ENCODE measurements at regions of chr11 and their contacts with region 1.

Region 1: GRCh38 chr11:119323538-119324033 is 6.7 kb upstream of the MCAM start:
- DNase-seq: peak; percentile 61 to 82 (median 77)
- ATAC-seq: peak; percentile 50
- H3K4me3 ChIP-seq: no peak overlapping the region
- H3K4me3 Mint-ChIP-seq: peak overlapping the region in 4 of 10 donors; percentile 10 to 54 (median 44)
- H3K27ac ChIP-seq: no peak overlapping the region
- H3K27ac Mint-ChIP-seq: peak overlapping the region in 2 of 9 donors; percentile 15 to 57
- H3K4me1 ChIP-seq: no peaks in the 10 kb centered on the region
- H3K4me1 Mint-ChIP-seq: peaks cover 11 to 33% (median 26%) of the 10 kb centered on the region in 7 donors
- H3K27me3 ChIP-seq: no peaks in the 10 kb centered on the region
- H3K27me3 Mint-ChIP-seq: peaks cover 0 to 17% (median 11%) of the 10 kb centered on the region in 5 donors

Region 2: DNA sequence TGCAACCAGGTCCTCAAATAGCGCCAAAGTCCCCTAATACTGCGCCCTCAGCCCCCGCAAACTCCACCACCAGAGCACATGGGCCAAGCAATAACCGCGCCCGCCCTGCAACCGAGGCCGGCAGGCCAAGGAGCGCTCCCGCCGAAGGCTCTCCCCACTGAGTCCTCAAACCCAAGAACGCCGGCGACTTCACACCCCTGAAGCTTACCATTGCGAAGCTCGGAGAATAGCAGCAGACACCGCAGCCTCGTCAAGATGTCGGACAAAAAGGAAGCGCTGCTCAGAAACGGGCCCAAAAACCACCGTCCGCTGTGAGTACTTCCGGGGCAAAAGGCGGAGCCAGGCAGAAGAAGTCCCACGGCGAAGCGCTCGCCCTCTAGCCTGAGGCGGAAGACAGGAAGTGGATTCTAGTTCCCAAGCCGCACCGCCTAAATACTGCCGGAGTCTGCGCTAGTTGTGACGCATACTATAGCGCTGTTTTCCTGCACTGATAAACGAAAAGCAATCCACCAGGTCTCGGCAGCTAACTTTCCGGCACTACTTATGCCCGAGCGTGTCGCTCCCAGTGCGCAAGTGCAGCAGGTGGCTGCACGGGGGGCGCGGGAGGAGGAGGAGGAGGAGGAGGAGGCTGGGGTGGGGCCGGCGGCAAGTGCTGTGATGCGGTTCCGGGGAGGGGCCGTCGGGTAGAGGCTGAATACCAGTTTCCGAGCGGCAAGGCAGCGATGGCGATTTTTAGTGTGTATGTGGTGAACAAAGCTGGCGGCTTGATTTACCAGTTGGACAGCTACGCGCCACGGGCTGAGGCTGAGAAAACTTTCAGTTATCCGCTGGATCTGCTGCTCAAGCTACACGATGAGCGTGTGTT is 305.3 kb before region 1 on chr11 and contains the starts of genes RPS25 and TRAPPC4:
- CTCF ChIA-PET with region 1: no interaction called
- POLR2A ChIA-PET with region 1: no interaction called
- intact Hi-C with region 1: loop called in 1 of 2 experiments (anchors 5 kb)
- DNase-seq: peak; percentile 87 to 98 (median 96)
- ATAC-seq: peak; percentile 93
- H3K4me3 ChIP-seq: peak within 1 kb of the TSS; percentile 89
- H3K4me3 Mint-ChIP-seq: peak within 1 kb of the TSS; percentile 96 to 100 (median 98)
- H3K27ac ChIP-seq: peak within 1 kb of the TSS; percentile 98
- H3K27ac Mint-ChIP-seq: peak within 1 kb of the TSS; percentile 99 to 100 (median 100)
- H3K4me1 ChIP-seq: peaks cover 30 to 32% of the 10 kb centered on the region in 2 donors
- H3K4me1 Mint-ChIP-seq: peaks cover 21 to 75% (median 50%) of the 10 kb centered on the region in 7 donors
- H3K27me3 ChIP-seq: no peaks in the 10 kb centered on the region
- H3K27me3 Mint-ChIP-seq: no peaks in the 10 kb centered on the region
- total RNA-seq, gene RPS25: 1,535 to 3,042 (median 2,772) TPM
- total RNA-seq, gene TRAPPC4: 70.7 to 80.3 (median 77.8) TPM

Region 3: GRCh38 chr11:119121008-119121810 is 202.4 kb before region 1 on chr11 and contains the start of gene HINFP:
- CTCF ChIA-PET with region 1: interaction called, 3 read pairs
- POLR2A ChIA-PET with region 1: interaction called, 3 read pairs
- intact Hi-C with region 1: loop called in 1 of 2 experiments (anchors 2 kb)
- DNase-seq: peak; percentile 92 to 100 (median 98)
- ATAC-seq: peak; percentile 99
- H3K4me3 ChIP-seq: peak within 1 kb of the TSS; percentile 71
- H3K4me3 Mint-ChIP-seq: peak within 1 kb of the TSS; percentile 86 to 98 (median 94)
- H3K27ac ChIP-seq: peak within 1 kb of the TSS; percentile 85
- H3K27ac Mint-ChIP-seq: peak within 1 kb of the TSS; percentile 78 to 98 (median 95)
- H3K4me1 ChIP-seq: peaks cover 17 to 23% of the 10 kb centered on the region in 2 donors
- H3K4me1 Mint-ChIP-seq: peaks cover 34 to 58% (median 50%) of the 10 kb centered on the region in 7 donors
- H3K27me3 ChIP-seq: no peaks in the 10 kb centered on the region
- H3K27me3 Mint-ChIP-seq: no peaks in the 10 kb centered on the region
- total RNA-seq, gene HINFP: 30.7 to 79.7 (median 42.7) TPM

Region 4: DNA sequence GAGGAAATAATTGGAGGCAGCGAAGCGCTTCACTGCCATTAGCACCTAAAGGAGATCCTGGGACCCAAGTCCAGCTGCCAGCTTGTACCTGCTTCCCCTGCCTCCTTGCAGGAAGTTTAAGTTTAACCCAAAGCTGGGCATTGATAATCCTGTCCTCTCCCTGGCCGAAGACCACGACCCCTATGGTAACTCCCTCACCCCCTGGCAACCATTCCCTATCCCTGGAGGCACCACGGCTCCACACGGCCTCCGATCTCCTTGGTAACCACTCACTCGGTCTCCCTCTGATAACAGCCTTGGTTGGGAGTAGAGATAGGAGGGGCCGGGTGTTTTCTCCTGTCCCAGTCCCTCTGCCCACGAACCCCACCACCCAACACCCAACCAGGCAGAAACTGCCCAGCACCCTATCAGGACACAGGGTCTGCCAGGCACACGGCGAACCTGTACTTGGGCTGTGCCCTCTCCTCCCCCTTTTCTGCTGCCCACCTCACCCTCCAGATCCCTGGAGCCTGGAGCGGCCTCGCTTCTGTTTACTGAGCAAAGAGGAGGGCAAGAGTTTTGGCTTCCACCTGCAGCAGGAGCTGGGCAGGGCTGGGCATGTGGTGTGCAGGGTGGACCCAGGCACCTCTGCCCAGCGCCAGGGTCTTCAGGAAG is 137.5 kb before region 1 on chr11:
- CTCF ChIA-PET with region 1: no interaction called
- POLR2A ChIA-PET with region 1: no interaction called
- intact Hi-C with region 1: no loop called
- DNase-seq: no peak
- ATAC-seq: no peak
- H3K4me3 ChIP-seq: no peak overlapping the region
- H3K4me3 Mint-ChIP-seq: no peak overlapping the region
- H3K27ac ChIP-seq: no peak overlapping the region
- H3K27ac Mint-ChIP-seq: no peak overlapping the region
- H3K4me1 ChIP-seq: no peaks in the 10 kb centered on the region
- H3K4me1 Mint-ChIP-seq: no peaks in the 10 kb centered on the region
- H3K27me3 ChIP-seq: no peaks in the 10 kb centered on the region
- H3K27me3 Mint-ChIP-seq: no peaks in the 10 kb centered on the region

Region 5: GRCh38 chr11:119196833-119197483 is 126.6 kb before region 1 on chr11:
- CTCF ChIA-PET with region 1: interaction called, 11 read pairs
- POLR2A ChIA-PET with region 1: no interaction called
- intact Hi-C with region 1: loop called in 1 of 2 experiments (anchors 2 kb)
- DNase-seq: peak in 8 of 9 donors; percentile 51 to 84 (median 78)
- ATAC-seq: peak; percentile 98
- H3K4me3 ChIP-seq: no peak overlapping the region
- H3K4me3 Mint-ChIP-seq: no peak overlapping the region
- H3K27ac ChIP-seq: no peak overlapping the region
- H3K27ac Mint-ChIP-seq: no peak overlapping the region
- H3K4me1 ChIP-seq: no peaks in the 10 kb centered on the region
- H3K4me1 Mint-ChIP-seq: peaks cover 0 to 10% (median 5%) of the 10 kb centered on the region in 7 donors
- H3K27me3 ChIP-seq: no peaks in the 10 kb centered on the region
- H3K27me3 Mint-ChIP-seq: peaks cover 0 to 5% (median 0%) of the 10 kb centered on the region in 5 donors

Region 6: GRCh38 chr11:119290894-119291497 is 32.6 kb before region 1 on chr11:
- CTCF ChIA-PET with region 1: interaction called, 13 read pairs
- POLR2A ChIA-PET with region 1: interaction called, 5 read pairs
- intact Hi-C with region 1: no loop called
- DNase-seq: no peak
- ATAC-seq: no peak
- H3K4me3 ChIP-seq: no peak overlapping the region
- H3K4me3 Mint-ChIP-seq: no peak overlapping the region
- H3K27ac ChIP-seq: no peak overlapping the region
- H3K27ac Mint-ChIP-seq: no peak overlapping the region
- H3K4me1 ChIP-seq: no peaks in the 10 kb centered on the region
- H3K4me1 Mint-ChIP-seq: peaks cover 0 to 8% (median 3%) of the 10 kb centered on the region in 7 donors
- H3K27me3 ChIP-seq: no peaks in the 10 kb centered on the region
- H3K27me3 Mint-ChIP-seq: no peaks in the 10 kb centered on the region

Region 7: DNA sequence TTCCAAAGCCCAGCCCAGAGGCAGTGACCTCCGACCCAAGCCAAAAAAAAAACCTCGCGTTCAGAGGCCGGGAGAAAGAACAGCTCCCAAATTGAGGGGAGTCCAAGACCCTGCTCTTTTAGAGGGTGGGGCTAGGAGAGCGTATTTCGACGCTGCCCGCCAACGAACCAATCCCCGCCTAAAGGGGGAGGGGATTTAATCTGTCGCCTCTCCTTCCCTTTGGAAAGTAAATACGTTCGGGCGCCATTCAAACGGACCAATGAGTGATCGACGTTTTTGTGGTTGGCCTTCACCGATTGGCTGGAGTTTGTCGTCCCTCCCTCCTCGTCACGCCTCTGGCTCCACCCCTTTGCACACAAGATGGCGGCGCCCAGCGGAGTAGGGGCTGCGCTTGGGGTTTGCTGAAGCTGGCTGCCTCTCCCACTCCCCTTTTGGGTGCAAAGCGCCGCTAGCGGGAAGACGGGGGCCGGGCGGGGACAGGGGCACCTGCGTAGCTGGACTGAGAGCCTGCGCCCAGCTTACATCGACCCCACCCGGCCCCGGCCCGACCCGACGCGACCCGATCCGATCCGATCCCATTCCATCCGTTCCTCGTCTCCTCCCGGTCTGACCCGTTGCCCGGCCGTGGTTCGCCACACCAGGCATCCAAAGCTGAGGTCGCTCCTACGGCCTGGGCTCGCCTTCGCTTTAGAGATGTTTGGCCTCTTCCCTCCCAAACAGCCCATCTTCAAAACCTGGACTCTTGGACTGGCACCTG is 10.8 kb after region 1 on chr11 and contains the start of gene RNF26:
- CTCF ChIA-PET with region 1: interaction called, 15 read pairs
- POLR2A ChIA-PET with region 1: interaction called, 7 read pairs
- intact Hi-C with region 1: loop called (anchors 1 kb)
- DNase-seq: peak; percentile 82 to 96 (median 94)
- ATAC-seq: peak; percentile 98
- H3K4me3 ChIP-seq: peak within 1 kb of the TSS; percentile 60
- H3K4me3 Mint-ChIP-seq: peak within 1 kb of the TSS; percentile 88 to 99 (median 98)
- H3K27ac ChIP-seq: peak within 1 kb of the TSS; percentile 89
- H3K27ac Mint-ChIP-seq: peak within 1 kb of the TSS; percentile 91 to 99 (median 97)
- H3K4me1 ChIP-seq: peaks cover 10 to 12% of the 10 kb centered on the region in 2 donors
- H3K4me1 Mint-ChIP-seq: peaks cover 22 to 59% (median 41%) of the 10 kb centered on the region in 7 donors
- H3K27me3 ChIP-seq: peaks cover 4 to 9% of the 10 kb centered on the region in 2 donors
- H3K27me3 Mint-ChIP-seq: peaks cover 9 to 30% (median 19%) of the 10 kb centered on the region in 5 donors
- total RNA-seq, gene RNF26: 16.9 to 28.3 (median 18.9) TPM

Measured in naive thymus-derived CD4-positive, alpha-beta T cell (primary cell).